ENCODE measurements at regions of chr5 and their contacts with region 1.

Region 1: DNA sequence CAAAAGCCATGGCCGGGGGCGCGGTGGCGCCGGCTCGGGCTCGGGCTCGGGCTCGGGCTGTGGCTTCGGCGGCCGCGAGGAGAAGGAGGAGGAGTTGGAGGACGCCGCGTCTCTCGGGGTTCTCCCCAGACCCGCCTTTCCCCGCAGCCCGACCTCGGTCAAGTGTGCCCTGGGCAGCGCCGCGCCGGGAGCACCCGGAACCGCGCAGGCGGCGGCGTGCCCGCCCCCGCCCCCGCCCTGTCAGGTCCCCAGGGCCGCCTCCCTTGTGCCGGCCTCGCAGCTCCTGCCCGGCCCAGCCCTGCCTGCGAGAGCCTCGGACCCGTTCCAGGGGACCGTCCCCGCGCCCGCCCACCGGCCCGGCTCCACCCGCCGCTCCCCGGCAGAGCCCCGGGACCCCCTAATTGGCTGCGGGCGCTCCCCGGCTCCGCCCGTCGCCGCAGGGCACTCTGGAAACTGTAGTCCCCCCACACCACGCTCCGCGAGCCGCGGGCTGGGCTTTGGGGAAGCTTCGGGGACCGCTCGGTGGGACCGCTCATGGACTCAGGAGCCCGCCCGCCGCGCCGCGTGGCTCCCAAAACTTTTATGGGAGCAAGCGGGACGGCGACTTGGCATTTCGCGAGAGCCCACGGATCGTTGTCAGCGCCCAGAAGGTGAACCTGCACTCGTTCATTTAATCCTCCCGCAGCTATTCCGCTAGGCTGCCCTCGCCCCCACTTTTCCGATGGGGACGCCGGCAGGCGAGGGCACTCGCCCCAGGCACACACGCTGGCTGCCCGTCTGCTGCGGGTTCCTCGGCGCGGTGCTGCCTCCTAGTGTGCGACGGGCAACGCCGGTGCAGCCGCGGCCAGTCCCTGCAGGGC is at the start of gene STK10:
- DNase-seq: peak; percentile 92
- H3K4me3 Mint-ChIP-seq: peak within 1 kb of the TSS; percentile 91
- H3K27ac Mint-ChIP-seq: peak within 1 kb of the TSS; percentile 92
- H3K4me1 Mint-ChIP-seq: peaks cover 32% of the 10 kb centered on the region
- H3K27me3 Mint-ChIP-seq: no peaks in the 10 kb centered on the region
- total RNA-seq, gene STK10: 44.7 to 55.1 TPM

Region 2: DNA sequence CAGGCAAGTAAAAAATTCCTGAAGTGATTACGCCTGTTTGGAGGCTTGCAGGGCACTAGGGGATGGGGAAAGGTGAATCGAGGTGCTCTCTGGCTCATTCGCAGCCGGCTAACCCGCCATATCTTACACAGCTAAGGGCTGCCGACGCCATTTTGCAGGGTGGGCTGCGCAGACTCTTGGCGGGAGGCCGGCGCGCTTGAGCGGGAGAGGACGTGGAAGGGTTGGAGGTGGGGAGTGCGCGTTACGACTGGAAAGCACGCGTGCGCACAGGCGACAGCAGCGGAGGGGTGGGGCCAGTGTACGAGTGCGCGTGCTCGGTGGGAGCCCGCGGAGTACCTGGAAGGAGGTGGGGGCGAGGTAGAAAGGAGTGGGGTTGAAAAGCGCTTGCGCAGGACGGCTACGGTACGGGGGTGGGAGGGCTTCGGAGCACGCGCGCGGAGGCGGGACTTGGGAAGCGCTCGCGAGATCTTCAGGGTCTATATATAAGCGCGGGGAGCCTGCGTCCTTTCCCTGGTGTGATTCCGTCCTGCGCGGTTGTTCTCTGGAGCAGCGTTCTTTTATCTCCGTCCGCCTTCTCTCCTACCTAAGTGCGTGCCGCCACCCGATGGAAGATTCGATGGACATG is 800.8 kb before region 1 on chr5 and contains the start of gene NPM1:
- CTCF ChIA-PET with region 1: no interaction called
- intact Hi-C with region 1: loop called (anchors 2 kb)
- DNase-seq: peak; percentile 98
- H3K4me3 Mint-ChIP-seq: peak within 1 kb of the TSS; percentile 98
- H3K27ac Mint-ChIP-seq: peak within 1 kb of the TSS; percentile 98
- H3K4me1 Mint-ChIP-seq: peaks cover 37% of the 10 kb centered on the region
- H3K27me3 Mint-ChIP-seq: no peaks in the 10 kb centered on the region
- total RNA-seq, gene NPM1: 3,194 to 3,467 TPM

Region 3: GRCh38 chr5:172006321-172007174 is 181.7 kb before region 1 on chr5 and contains the start of gene FBXW11:
- CTCF ChIA-PET with region 1: interaction called, 6 read pairs
- intact Hi-C with region 1: loop called (anchors 1 kb)
- DNase-seq: peak; percentile 96
- H3K4me3 Mint-ChIP-seq: peak within 1 kb of the TSS; percentile 96
- H3K27ac Mint-ChIP-seq: peak within 1 kb of the TSS; percentile 99
- H3K4me1 Mint-ChIP-seq: peaks cover 46% of the 10 kb centered on the region
- H3K27me3 Mint-ChIP-seq: no peaks in the 10 kb centered on the region
- total RNA-seq, gene FBXW11: 32.8 to 35.5 TPM

Region 4: DNA sequence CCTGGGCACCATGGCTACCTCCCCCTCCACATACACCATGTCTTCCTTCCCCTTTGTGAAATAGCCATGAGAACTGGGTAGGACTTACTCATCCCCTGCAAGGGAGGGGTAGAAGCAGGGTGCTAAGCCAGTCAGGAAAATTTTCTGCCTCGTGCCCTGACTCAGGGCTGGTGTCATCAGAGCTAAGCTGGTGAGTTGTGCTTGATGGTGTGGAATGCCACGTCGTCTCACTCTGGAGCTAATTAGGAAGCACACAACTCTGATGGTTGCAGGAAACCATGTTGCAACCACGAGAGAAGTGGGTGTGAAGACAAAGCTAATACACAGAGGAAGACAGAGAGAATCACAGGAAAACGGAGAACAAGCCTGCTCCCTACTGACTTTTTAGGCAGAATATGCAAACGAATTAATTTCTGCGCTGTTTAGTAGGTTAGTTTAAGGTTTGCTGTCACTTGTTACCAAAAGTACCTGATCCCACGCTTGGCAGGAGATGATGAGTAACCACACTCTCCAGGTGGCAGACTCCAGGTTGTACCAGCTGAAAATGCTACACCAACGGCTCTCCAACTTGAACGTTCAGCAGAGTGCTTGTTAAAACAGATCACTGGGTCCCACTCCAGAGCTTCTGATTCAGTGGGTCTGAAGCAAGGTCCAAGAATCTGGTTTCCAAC is 54.8 kb before region 1 on chr5:
- CTCF ChIA-PET with region 1: interaction called, 9 read pairs
- intact Hi-C with region 1: loop called (anchors 1 kb)
- DNase-seq: peak; percentile 86
- H3K4me3 Mint-ChIP-seq: peak overlapping the region; percentile 53
- H3K27ac Mint-ChIP-seq: peak overlapping the region; percentile 88
- H3K4me1 Mint-ChIP-seq: peaks cover 61% of the 10 kb centered on the region
- H3K27me3 Mint-ChIP-seq: no peaks in the 10 kb centered on the region

Region 5: GRCh38 chr5:172274921-172275753 is 86.9 kb after region 1 on chr5:
- CTCF ChIA-PET with region 1: no interaction called
- intact Hi-C with region 1: loop called (anchors 1 kb)
- DNase-seq: peak; percentile 88
- H3K4me3 Mint-ChIP-seq: no peak overlapping the region
- H3K27ac Mint-ChIP-seq: peak overlapping the region; percentile 73
- H3K4me1 Mint-ChIP-seq: peaks cover 34% of the 10 kb centered on the region
- H3K27me3 Mint-ChIP-seq: no peaks in the 10 kb centered on the region

Region 6: GRCh38 chr5:172361566-172362238 is 173.4 kb after region 1 on chr5:
- CTCF ChIA-PET with region 1: no interaction called
- intact Hi-C with region 1: loop called (anchors 5 kb)
- DNase-seq: peak; percentile 82
- H3K4me3 Mint-ChIP-seq: no peak overlapping the region
- H3K27ac Mint-ChIP-seq: peak overlapping the region; percentile 83
- H3K4me1 Mint-ChIP-seq: peaks cover 8% of the 10 kb centered on the region
- H3K27me3 Mint-ChIP-seq: no peaks in the 10 kb centered on the region

Region 7: GRCh38 chr5:172658961-172659491 is 470.8 kb after region 1 on chr5:
- CTCF ChIA-PET with region 1: no interaction called
- intact Hi-C with region 1: no loop called
- DNase-seq: no peak
- H3K4me3 Mint-ChIP-seq: no peak overlapping the region
- H3K27ac Mint-ChIP-seq: no peak overlapping the region
- H3K4me1 Mint-ChIP-seq: no peaks in the 10 kb centered on the region
- H3K27me3 Mint-ChIP-seq: no peaks in the 10 kb centered on the region

Measured in activated naive CD4-positive, alpha-beta T cell treated with anti-CD3 and anti-CD28 coated beads for 36 hours (primary cell).